IMR-90 (cell line): ENCODE measurements at regions of chr16 and their contacts with region 1.

Region 1: GRCh38 chr16:19745286-19746010 is 27.4 kb downstream of the IQCK start:
- DNase-seq: peak; percentile 71
- ATAC-seq: peak; percentile 90
- H3K4me3 ChIP-seq: no peak overlapping the region
- H3K27ac ChIP-seq: no peak overlapping the region; the same call in 1 of the 2 replicates
- H3K4me1 ChIP-seq: peaks cover 8% of the 10 kb centered on the region; the same call in 1 of the 2 replicates
- H3K27me3 ChIP-seq: no peaks in the 10 kb centered on the region
- CTCF ChIP-seq: no peak
- POLR2A ChIP-seq: no peak
- RAD21 ChIP-seq: no peak

Region 2: DNA sequence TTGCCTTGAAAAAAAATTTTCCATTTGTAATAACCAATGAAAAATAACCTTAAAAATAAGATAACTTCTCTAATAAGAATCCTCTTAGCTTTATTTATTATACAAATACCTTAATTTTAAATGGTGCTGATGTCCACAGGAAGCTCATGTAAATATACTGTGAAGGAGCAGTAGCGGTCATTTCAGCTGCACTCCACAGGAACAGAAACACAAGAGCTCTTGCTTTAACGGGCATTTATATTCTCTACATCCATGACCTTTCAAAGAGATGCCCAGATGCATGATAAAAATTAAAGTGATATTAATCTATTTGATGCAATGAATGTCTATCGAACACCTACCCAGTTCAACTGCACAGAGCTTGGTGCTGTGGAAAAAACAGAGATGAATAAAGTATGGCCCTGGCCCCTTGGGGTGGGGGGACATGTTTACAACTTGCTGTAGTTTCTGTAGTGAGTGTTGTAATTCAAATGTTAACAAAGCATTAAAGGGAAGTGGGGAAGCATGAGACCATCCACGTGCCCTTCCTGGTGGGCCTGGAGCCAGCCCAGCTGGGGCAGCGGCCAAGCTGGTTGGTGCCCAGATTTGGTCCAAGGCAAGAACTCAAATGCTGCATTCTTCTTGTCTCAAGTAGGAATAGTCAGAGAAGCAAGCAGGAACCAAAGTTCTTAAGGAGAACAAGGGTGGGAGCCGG is 20.6 kb after region 1 on chr16:
- CTCF ChIA-PET with region 1: no interaction called
- POLR2A ChIA-PET with region 1: no interaction called
- dilution Hi-C with region 1: no loop called
- in situ Hi-C with region 1: no loop called
- intact Hi-C with region 1: no loop called
- DNase-seq: no peak
- ATAC-seq: no peak; the same call in 1 of the 2 replicates
- H3K4me3 ChIP-seq: no peak overlapping the region
- H3K27ac ChIP-seq: no peak overlapping the region
- H3K4me1 ChIP-seq: peaks cover 4% of the 10 kb centered on the region; the same call in 1 of the 2 replicates
- H3K27me3 ChIP-seq: no peaks in the 10 kb centered on the region
- CTCF ChIP-seq: no peak
- POLR2A ChIP-seq: no peak
- RAD21 ChIP-seq: no peak

Region 3: GRCh38 chr16:19831678-19832077 is 86.2 kb after region 1 on chr16:
- CTCF ChIA-PET with region 1: no interaction called
- POLR2A ChIA-PET with region 1: no interaction called
- dilution Hi-C with region 1: no loop called
- in situ Hi-C with region 1: no loop called
- intact Hi-C with region 1: loop called (anchors 5 kb)
- DNase-seq: peak; percentile 89
- ATAC-seq: peak; percentile 95
- H3K4me3 ChIP-seq: no peak overlapping the region
- H3K27ac ChIP-seq: no peak overlapping the region
- H3K4me1 ChIP-seq: peaks cover 4% of the 10 kb centered on the region
- H3K27me3 ChIP-seq: no peaks in the 10 kb centered on the region
- CTCF ChIP-seq: no peak
- POLR2A ChIP-seq: no peak
- RAD21 ChIP-seq: no peak

Region 4: GRCh38 chr16:20084624-20085211 is 339.3 kb after region 1 on chr16:
- CTCF ChIA-PET with region 1: no interaction called
- POLR2A ChIA-PET with region 1: no interaction called
- dilution Hi-C with region 1: no loop called
- in situ Hi-C with region 1: no loop called
- intact Hi-C with region 1: no loop called
- DNase-seq: no peak
- ATAC-seq: no peak
- H3K4me3 ChIP-seq: no peak overlapping the region
- H3K27ac ChIP-seq: no peak overlapping the region
- H3K4me1 ChIP-seq: no peaks in the 10 kb centered on the region
- H3K27me3 ChIP-seq: no peaks in the 10 kb centered on the region
- CTCF ChIP-seq: no peak
- POLR2A ChIP-seq: no peak
- RAD21 ChIP-seq: no peak